ENCODE measurements at regions of chr12 and their contacts with region 1.

Region 1: GRCh38 chr12:45745861-45746277 is 16.4 kb downstream of the ARID2 start:
- DNase-seq: no peak
- ATAC-seq: peak; percentile 61 to 88 (median 82)
- H3K4me3 ChIP-seq: no peak overlapping the region
- H3K27ac ChIP-seq: no peak overlapping the region
- H3K4me1 ChIP-seq: peaks cover 0 to 4% (median 4%) of the 10 kb centered on the region in 3 donors
- H3K27me3 ChIP-seq: no peaks in the 10 kb centered on the region
- CTCF ChIP-seq: peak in 2 of 4 donors; percentile 15 to 22

Region 2: DNA sequence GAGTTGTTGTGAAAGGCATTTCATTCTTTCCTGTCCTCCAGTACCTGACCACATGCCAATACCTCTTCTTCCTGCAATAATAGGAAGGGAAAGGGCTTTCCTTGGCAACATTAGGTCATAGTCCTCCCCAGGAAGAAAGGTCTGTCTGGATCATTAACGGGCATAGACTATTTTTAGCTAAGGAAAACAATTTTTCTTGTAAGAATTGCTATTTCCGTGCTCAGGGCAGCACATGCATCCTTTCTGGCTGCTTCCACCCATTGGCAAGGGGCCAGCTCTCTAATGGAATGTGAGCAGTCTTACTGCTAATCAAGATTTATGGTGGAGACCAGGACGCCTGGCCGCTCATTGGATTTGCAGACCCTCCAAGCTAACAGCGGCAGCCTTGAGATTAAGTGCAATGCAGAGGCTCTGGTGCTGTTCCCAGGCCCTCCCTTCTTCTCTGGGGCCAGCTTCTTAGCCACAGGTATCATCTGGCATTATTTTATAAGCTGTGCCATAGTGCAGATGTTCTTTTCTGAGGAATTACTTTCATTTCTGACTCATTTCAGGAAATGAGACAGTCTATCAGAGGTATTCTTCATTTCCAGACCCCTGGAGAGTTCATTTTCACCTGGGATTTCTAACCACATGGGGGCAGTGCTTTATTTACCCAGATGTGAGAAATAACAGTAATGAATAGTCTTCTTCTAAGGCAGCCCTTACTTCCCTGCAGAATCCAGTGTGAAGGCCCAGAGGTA is 477.0 kb before region 1 on chr12:
- intact Hi-C with region 1: no loop called
- DNase-seq: peak; percentile 52 to 81 (median 70)
- ATAC-seq: peak; percentile 69 to 83 (median 76)
- H3K4me3 ChIP-seq: no peak overlapping the region
- H3K27ac ChIP-seq: peak overlapping the region in 2 of 4 donors; percentile 54 to 68
- H3K4me1 ChIP-seq: peaks cover 13 to 27% (median 26%) of the 10 kb centered on the region in 3 donors
- H3K27me3 ChIP-seq: no peaks in the 10 kb centered on the region
- CTCF ChIP-seq: peak in 2 of 4 donors; percentile 12 to 15

Region 3: DNA sequence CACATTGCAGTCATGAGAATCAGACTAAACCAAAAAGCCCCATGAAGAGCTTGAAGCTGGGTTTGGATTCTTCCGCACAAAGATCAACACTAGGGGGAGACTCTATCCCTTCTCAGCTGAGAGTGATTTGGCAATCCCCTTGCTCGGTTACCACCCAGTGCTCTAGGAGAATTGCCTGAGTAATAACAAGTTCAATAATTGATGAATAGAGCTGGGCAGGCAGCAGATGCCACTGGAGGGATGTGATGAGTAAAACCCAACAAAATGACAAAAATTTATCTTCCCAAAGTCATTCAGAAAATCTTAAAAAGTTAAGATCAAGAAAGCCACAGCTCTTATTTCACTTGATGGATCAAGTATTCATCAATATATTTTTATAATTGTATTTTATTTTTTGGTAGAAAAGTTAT is 202.0 kb before region 1 on chr12:
- intact Hi-C with region 1: loop called in 1 of 3 experiments (anchors 10 kb)
- DNase-seq: peak in 3 of 6 donors; percentile 28 to 54 (median 35)
- ATAC-seq: peak; percentile 84 to 97 (median 94)
- H3K4me3 ChIP-seq: no peak overlapping the region
- H3K27ac ChIP-seq: no peak overlapping the region
- H3K4me1 ChIP-seq: no peaks in the 10 kb centered on the region
- H3K27me3 ChIP-seq: no peaks in the 10 kb centered on the region
- CTCF ChIP-seq: peak; percentile 38 to 68 (median 64)